Mammary epithelial cell (primary cell): ENCODE measurements at regions of chr13 and their contacts with region 1.

Region 1: DNA sequence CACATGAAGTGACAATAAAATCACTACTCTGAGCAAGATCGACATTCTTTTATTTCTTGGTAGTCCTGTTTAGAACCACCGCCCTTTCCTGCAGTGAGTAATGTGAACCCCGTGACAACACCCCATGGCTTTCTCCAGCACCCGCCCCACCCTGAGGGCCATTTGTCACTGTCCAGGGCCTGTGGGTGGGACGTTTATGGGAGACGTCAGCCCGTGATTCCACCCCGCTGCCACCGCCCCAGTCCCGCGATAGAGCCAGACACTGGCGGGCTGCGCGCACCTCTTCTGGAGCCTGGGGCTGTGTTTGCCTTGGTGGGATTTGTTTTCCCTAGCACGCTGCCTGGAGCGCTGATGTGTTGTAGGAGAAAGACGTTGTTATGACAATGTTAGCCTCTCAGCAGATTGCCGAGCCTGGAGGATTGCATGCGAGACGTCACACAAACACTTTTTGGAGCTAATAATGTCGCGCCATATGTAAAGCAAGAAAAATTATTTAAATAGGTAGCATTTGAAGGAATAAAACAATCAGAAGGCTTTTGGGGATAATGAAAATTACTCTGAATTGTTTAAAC is 263.7 kb downstream of the TEX29 start:
- DNase-seq: no peak
- H3K4me3 ChIP-seq: no peak overlapping the region
- H3K27ac ChIP-seq: no peak overlapping the region
- H3K4me1 ChIP-seq: no peaks in the 10 kb centered on the region
- H3K27me3 ChIP-seq: no peaks in the 10 kb centered on the region
- CTCF ChIP-seq: no peak

Region 2: DNA sequence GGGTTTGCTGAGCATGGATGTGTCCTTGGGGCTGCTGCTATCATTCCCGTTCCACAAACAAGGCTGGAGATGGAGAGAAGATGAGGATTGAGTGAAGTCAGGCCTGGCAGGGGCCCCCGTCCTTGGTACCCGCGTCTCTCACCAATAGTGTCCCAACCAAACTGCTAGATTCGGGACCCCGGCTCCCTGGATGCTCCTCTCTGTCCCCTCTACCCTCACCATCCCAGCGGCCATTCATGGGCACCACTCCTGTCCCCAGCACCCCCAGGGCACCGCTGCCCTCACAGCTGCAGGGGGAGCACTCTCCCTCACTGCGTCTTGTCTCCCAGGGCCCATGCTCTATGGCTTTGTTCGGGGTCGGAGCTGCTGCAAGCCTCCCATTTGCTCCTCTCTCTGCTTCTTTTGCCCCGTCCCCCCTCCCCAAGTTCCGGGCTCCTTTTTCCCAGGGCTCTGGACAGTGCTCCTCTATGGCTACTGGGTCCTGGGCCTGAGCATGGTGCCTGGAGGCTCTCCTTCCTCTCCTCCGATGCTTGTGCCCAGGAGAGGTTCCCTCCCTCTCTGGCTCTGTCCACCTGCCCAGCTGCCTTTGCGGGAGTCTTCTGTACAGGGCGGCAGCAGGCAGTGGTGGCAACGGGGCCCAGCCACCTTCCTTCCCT is 44.3 kb before region 1 on chr13:
- CTCF ChIA-PET with region 1: no interaction called
- dilution Hi-C with region 1: loop called (anchors 5 kb)
- in situ Hi-C with region 1: no loop called
- intact Hi-C with region 1: no loop called
- DNase-seq: no peak
- H3K4me3 ChIP-seq: no peak overlapping the region
- H3K27ac ChIP-seq: no peak overlapping the region
- H3K4me1 ChIP-seq: no peaks in the 10 kb centered on the region
- H3K27me3 ChIP-seq: no peaks in the 10 kb centered on the region
- CTCF ChIP-seq: no peak

Region 3: DNA sequence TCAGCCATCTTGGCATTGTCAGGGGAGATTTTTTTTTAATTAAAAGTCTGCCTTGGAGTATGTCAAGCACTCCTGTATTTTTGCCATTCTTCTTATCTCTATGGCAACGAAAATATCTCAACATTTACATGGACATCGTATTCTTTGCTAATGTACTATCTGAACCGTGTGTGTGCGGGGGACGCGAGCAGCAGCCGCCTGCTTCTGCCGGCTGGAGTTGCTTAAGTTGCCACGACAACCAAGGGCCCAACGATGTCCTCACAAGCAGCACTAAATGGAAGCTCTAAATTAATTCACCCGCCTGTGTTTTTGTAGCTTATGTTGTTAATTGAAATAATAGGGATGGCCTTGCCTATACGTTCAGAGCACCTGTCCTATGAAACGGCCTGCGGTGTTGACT is 45.7 kb after region 1 on chr13:
- CTCF ChIA-PET with region 1: no interaction called
- dilution Hi-C with region 1: loop called (anchors 5 kb)
- in situ Hi-C with region 1: no loop called
- intact Hi-C with region 1: no loop called
- DNase-seq: no peak
- H3K4me3 ChIP-seq: no peak overlapping the region
- H3K27ac ChIP-seq: no peak overlapping the region
- H3K4me1 ChIP-seq: no peaks in the 10 kb centered on the region
- H3K27me3 ChIP-seq: no peaks in the 10 kb centered on the region
- CTCF ChIP-seq: no peak